Activated CD4-positive, alpha-beta T cell treated with anti-CD3 and anti-CD28 coated beads for 36 hours (primary cell): ENCODE measurements at regions of chr6 and their contacts with region 1.

Region 1: GRCh38 chr6:89080542-89081422 is at the start of gene PNRC1:
- DNase-seq: peak; percentile 100
- ATAC-seq: peak; percentile 72
- H3K4me3 Mint-ChIP-seq: peak within 1 kb of the TSS; percentile 94
- H3K27ac Mint-ChIP-seq: peak within 1 kb of the TSS; percentile 100
- H3K4me1 Mint-ChIP-seq: peaks cover 28% of the 10 kb centered on the region
- H3K27me3 Mint-ChIP-seq: no peaks in the 10 kb centered on the region
- total RNA-seq, gene PNRC1: 85.6 to 93.7 TPM

Region 2: DNA sequence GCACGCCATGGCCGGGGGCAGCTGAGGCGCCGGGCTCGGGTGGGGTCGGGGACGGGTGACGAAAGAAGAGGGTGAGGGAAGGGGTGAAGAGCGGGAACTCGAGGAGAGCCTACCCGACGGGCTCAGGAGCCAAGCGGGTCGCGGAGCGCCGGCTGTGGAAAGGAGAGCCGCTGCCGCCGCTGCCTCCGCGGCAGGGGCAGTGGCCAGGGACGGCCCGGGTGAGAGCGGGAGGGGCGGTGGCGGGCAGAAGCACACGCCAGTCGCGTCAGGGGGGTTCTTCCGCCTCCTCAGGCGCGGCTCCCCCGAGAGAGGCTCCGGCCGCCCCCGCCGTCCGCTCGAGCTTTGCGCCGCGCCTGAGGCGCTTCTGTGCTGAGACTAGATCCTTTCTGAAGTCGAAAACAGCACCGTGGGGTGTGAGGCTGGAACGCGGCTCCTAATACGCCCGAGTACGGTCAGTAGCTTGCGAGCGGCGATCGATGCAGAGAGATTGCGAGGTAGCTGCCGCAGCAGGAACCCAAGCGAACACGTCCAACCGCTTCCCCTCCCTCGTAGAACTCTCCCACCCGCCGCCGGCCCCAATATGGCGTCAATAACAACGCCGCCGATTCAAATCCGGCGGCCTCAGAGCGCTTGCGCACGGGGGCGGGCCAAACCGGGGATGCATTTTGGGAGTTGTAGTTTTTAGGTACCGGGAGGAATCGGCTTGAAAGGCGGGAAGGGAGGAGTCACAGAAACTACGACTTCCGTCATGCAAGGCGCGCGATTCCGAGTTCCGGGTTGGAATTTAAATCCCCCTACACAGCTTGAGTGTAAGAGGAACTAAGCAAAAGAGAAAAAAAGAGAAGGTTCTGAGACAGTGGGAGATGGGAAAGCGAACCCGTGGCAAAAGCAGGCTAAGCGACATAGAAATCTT is 1378.8 kb before region 1 on chr6 and contains the start of gene AKIRIN2:
- CTCF ChIA-PET with region 1: no interaction called
- POLR2A ChIA-PET with region 1: no interaction called
- intact Hi-C with region 1: loop called in 1 of 2 experiments (anchors 2 kb)
- DNase-seq: peak; percentile 98
- ATAC-seq: peak; percentile 75
- H3K4me3 Mint-ChIP-seq: peak within 1 kb of the TSS; percentile 87
- H3K27ac Mint-ChIP-seq: peak within 1 kb of the TSS; percentile 92
- H3K4me1 Mint-ChIP-seq: peaks cover 45% of the 10 kb centered on the region
- H3K27me3 Mint-ChIP-seq: no peaks in the 10 kb centered on the region
- total RNA-seq, gene AKIRIN2: 41.4 to 46.3 TPM

Region 3: GRCh38 chr6:89098461-89098860 is 17.7 kb after region 1 on chr6:
- CTCF ChIA-PET with region 1: interaction called, 15 read pairs
- POLR2A ChIA-PET with region 1: interaction called, 9 read pairs
- intact Hi-C with region 1: loop called in 1 of 2 experiments (anchors 2 kb)
- DNase-seq: no peak
- ATAC-seq: peak; percentile 86
- H3K4me3 Mint-ChIP-seq: no peak overlapping the region
- H3K27ac Mint-ChIP-seq: no peak overlapping the region
- H3K4me1 Mint-ChIP-seq: peaks cover 9% of the 10 kb centered on the region
- H3K27me3 Mint-ChIP-seq: no peaks in the 10 kb centered on the region

Region 4: DNA sequence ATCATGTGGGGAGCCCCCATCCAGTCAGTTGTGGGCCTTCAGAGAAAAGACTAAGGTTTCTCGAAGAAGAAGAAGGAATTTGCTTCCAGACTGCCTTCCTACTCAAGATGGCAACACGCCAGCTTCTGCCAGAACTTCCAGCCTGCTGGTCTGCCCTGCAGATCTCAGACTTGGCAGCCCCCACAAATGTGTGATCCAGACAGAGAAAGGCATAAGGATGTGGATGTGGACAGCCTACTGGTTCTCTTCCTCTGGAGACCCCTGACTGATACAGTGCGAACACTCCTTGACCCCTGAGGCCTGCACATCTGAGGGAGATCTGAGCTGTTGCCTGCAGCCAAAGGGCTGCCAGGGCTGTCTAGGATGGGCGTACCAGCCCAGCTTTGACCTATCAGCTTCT is 127.8 kb after region 1 on chr6:
- CTCF ChIA-PET with region 1: no interaction called
- POLR2A ChIA-PET with region 1: no interaction called
- intact Hi-C with region 1: no loop called
- DNase-seq: no peak
- ATAC-seq: no peak
- H3K4me3 Mint-ChIP-seq: no peak overlapping the region
- H3K27ac Mint-ChIP-seq: no peak overlapping the region
- H3K4me1 Mint-ChIP-seq: no peaks in the 10 kb centered on the region
- H3K27me3 Mint-ChIP-seq: peaks cover 4% of the 10 kb centered on the region

Region 5: DNA sequence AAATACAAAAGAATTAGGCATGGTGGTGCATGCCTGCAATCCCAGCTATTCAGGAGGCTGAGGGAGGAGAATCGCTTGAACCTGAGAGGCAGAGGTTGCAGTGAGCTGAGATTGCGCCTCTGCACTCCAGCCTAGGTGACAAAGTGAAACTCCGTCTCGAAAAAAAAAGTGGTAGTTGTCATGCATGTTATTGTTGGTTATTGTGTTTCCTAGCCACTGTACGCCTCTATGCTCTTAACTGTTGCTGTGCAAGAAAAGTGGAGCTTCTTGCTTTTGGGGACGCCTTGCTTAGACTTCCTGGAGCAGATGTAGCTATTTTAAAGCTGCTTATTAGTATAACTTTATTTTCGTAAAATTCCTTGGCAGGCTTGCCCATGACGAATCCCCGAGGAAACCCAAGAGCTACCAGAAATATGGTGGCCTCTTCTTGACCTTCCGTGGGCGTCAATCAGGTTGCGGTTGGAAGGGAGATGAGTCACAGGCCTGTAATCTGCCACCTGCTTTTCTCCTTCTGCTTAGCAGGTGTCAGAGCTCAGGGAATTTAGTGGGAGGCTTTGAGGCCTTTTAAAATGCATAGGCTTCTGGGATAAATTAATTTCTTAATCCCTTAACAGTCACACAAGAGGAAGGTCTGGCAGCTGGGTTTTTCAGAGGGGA is 217.0 kb after region 1 on chr6:
- CTCF ChIA-PET with region 1: no interaction called
- POLR2A ChIA-PET with region 1: interaction called, 4 read pairs
- intact Hi-C with region 1: loop called in 1 of 2 experiments (anchors 1 kb)
- DNase-seq: peak; percentile 85
- ATAC-seq: peak; percentile 77
- H3K4me3 Mint-ChIP-seq: peak overlapping the region; percentile 35
- H3K27ac Mint-ChIP-seq: peak overlapping the region; percentile 72
- H3K4me1 Mint-ChIP-seq: peaks cover 21% of the 10 kb centered on the region
- H3K27me3 Mint-ChIP-seq: no peaks in the 10 kb centered on the region

Region 6: DNA sequence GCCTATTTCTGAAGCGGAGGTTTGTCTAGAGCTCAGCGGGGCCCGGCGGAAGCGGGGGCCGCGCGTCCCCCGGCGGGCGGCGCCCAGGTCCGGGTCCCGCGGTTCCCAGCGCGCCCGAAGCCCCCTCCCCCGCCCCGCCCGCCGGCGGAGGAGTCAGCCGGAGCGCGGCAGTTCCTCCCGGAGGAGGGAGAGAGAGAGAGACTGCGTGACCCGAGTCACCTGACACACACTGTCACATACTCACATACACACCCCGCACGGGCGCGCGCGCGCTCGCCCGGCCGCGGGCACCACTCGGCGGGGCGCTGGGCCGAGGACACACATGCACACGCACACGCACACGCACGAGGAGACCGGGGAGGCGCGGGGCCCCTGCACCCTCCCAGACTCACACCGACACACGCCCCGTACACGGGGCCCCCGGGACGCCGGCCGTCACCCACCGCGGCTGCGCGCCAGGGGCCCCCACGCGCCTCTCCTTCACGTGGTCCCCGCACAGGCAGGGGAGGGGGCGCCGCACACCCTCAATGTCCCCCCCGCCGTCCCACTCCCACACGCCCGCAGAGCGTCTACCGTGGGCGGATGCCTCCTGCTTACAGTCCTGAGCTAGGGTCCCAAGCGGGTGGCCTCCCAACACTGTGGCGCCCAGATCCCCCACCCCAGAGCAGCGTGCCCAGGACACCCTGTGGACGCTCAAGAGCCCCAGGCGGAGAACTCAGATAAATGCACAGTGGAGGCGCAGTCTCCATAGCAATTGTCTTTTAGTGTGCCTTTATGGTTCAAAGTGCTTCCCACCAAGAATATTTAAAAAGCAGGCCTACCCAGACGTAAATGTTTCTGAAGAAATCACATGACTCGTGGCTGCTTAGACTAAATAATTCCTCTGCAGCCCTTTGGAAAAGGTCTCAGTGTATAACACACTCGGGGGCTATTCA is 331.6 kb after region 1 on chr6 and contains the start of gene RRAGD:
- CTCF ChIA-PET with region 1: no interaction called
- POLR2A ChIA-PET with region 1: no interaction called
- intact Hi-C with region 1: loop called in 1 of 2 experiments (anchors 2 kb)
- DNase-seq: peak; percentile 83
- ATAC-seq: peak; percentile 80
- H3K4me3 Mint-ChIP-seq: peak within 1 kb of the TSS; percentile 83
- H3K27ac Mint-ChIP-seq: peak within 1 kb of the TSS; percentile 85
- H3K4me1 Mint-ChIP-seq: peaks cover 20% of the 10 kb centered on the region
- H3K27me3 Mint-ChIP-seq: peaks cover 3% of the 10 kb centered on the region
- total RNA-seq, gene RRAGD: 19.6 to 20.1 TPM

Region 7: DNA sequence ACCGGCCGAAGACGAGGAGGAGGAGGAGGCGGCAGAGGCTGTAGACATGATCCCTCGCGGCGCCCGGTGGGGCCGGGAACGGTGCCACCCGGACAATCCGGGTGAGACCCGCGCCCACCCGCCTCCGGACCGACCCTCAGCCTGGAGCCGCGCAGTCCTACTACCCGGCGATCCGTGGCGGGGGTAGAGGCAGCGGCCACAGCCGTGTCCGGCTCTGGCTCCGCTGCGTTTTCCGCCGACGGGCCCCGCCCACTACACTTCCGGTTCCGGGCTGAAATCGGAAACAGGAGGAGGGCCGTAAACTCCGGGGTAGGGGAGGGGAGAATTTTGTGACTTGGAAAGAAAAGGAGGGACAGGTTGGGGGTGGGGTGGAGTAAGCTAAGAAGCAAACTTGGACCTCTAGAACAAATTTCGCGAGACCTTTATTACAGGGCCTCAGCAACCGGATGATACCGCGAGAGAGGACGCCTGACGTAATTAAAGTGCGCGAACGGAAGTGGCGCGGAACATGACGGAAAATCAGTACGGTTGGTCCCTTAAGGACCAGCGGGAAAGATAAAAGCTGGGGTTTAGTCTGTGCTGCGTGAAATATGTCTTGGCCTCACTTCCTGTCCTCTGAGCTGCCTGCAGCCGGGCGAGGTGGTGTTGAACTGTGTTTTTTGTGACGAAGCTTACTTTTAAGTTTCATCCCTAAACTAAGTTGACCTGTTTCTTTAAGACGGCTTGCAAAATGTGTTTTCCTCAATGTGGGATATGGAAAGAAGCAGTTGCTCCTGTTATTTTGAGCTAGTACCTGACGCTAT is 1506.3 kb after region 1 on chr6 and contains the start of gene MAP3K7:
- CTCF ChIA-PET with region 1: no interaction called
- POLR2A ChIA-PET with region 1: no interaction called
- intact Hi-C with region 1: loop called (anchors 1 to 2 kb)
- DNase-seq: peak; percentile 95
- ATAC-seq: peak; percentile 93
- H3K4me3 Mint-ChIP-seq: peak within 1 kb of the TSS; percentile 95
- H3K27ac Mint-ChIP-seq: peak within 1 kb of the TSS; percentile 98
- H3K4me1 Mint-ChIP-seq: peaks cover 40% of the 10 kb centered on the region
- H3K27me3 Mint-ChIP-seq: peaks cover 7% of the 10 kb centered on the region
- total RNA-seq, gene MAP3K7: 27.5 to 32.6 TPM